ENCODE measurements at regions of chr5 and their contacts with region 1.

Region 1: GRCh38 chr5:159849437-159850083 is 66.7 kb upstream of the ADRA1B start:
- DNase-seq: no peak

Region 2: DNA sequence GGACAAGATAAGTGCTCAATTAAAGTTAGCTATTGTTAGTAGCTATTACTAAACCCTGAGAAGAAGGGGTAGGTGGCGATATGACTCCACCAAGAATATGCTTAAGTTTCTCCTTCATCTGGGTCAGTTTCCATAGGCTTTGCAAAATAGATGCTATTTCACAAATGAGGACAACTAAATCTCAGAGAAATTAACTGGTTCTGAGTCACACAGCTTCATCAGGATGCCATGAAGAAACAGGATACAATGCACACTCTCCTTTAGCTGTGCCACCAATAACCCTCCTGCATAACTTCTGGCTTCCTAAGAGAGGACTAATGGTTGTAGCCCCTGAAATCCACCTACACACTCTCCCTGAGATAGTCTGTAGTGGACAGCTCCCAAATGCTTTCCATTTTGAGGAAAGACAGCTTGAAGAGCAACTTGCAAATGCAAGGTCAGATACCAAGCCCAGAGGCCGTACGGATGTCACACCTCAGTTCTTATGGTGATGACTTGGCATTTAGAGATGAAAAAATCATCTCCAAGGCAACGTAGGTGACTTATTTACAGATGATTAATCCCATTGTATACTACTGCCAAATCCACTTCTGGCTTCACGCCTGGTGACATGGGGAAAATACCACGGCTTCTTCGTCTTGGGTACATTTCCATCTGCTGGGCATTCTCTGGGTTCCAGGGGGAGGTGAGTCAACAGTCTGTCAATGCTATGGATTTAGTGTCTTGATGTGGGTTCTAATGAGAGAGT is 267.9 kb before region 1 on chr5:
- intact Hi-C with region 1: loop called in 1 of 2 experiments (anchors 10 kb)
- DNase-seq: no peak

Measured in posterior vena cava (tissue), 2 donors.